ENCODE measurements at regions of chr10 and their contacts with region 1.

Region 1: GRCh38 chr10:101367569-101368453 is 13.8 kb downstream of the BTRC start:
- DNase-seq: no peak
- H3K4me3 Mint-ChIP-seq: no peak overlapping the region
- H3K27ac Mint-ChIP-seq: no peak overlapping the region
- H3K4me1 Mint-ChIP-seq: peaks cover 10% of the 10 kb centered on the region
- H3K27me3 Mint-ChIP-seq: no peaks in the 10 kb centered on the region

Region 2: DNA sequence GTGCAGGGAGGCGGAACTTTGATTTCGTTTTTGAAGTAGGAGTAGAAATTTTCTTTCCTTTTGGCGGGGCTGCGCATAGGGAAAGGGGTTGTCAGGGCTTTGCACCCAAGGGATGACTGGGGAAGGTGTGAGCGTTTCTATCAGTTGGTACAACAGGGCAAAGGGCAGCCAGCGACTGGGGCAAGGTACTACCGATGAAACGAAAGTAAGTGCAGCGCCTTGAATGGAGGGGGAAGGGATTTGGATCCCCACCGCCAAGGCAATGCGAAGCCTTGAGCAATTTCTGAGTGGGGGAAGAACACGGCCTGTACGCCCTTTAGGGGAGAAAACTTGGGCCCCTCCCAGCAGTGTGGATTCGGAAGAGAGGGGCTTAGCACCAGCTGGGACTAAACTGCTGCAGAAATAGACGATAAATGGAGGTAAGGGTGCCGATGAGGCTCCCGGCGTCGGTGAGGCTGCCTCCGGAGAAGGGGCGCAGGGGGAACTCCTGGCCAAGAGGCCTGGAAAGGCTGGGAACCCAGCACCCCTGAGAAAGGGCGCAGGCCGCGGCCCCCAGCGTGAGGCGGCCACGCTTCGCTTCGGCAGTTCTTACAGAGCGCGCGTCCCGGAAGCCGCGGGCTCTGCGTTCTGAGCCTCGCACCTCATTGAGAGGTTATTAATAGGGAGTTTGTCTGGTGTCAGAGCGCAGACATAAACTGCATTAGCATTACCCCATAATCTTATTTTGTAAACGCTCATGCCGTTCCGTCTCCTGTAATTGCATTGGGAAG is 246.7 kb before region 1 on chr10:
- intact Hi-C with region 1: no loop called
- DNase-seq: no peak
- H3K4me3 Mint-ChIP-seq: peak overlapping the region; percentile 85
- H3K27ac Mint-ChIP-seq: no peak overlapping the region
- H3K4me1 Mint-ChIP-seq: peaks cover 15% of the 10 kb centered on the region
- H3K27me3 Mint-ChIP-seq: peaks cover 67% of the 10 kb centered on the region

Region 3: GRCh38 chr10:101380353-101381017 is 12.7 kb after region 1 on chr10:
- intact Hi-C with region 1: loop called (anchors 1 kb)
- DNase-seq: no peak
- H3K4me3 Mint-ChIP-seq: no peak overlapping the region
- H3K27ac Mint-ChIP-seq: peak overlapping the region; percentile 69
- H3K4me1 Mint-ChIP-seq: peaks cover 20% of the 10 kb centered on the region
- H3K27me3 Mint-ChIP-seq: no peaks in the 10 kb centered on the region

Region 4: GRCh38 chr10:101397140-101397539 is 29.3 kb after region 1 on chr10:
- intact Hi-C with region 1: no loop called
- DNase-seq: peak; percentile 27
- H3K4me3 Mint-ChIP-seq: no peak overlapping the region
- H3K27ac Mint-ChIP-seq: no peak overlapping the region
- H3K4me1 Mint-ChIP-seq: no peaks in the 10 kb centered on the region
- H3K27me3 Mint-ChIP-seq: no peaks in the 10 kb centered on the region

Region 5: GRCh38 chr10:101453791-101454718 is 86.2 kb after region 1 on chr10:
- intact Hi-C with region 1: loop called (anchors 5 kb)
- DNase-seq: no peak
- H3K4me3 Mint-ChIP-seq: no peak overlapping the region
- H3K27ac Mint-ChIP-seq: peak overlapping the region; percentile 68
- H3K4me1 Mint-ChIP-seq: peaks cover 35% of the 10 kb centered on the region
- H3K27me3 Mint-ChIP-seq: peaks cover 26% of the 10 kb centered on the region

Measured in activated T-helper 2 cell treated with anti-CD3 and anti-CD28 coated beads, Interferon-gamma antibody, Interleukin-2, Interleukin-4, amounts not matched to agents 10 μg/mL and 5 μg/mL and 100 μg/mL, durations not matched to agents 14 hours and 24 hours and 36 hours (primary cell).